ENCODE measurements at regions of chr5 and their contacts with region 1.

Region 1: GRCh38 chr5:73519531-73520283 is 21.5 kb downstream of the BTF3 start:
- DNase-seq: peak in 7 of 10 donors; percentile 24 to 89 (median 61)

Region 2: GRCh38 chr5:73540192-73540591 is 20.5 kb after region 1 on chr5:
- intact Hi-C with region 1: loop called (anchors 1 kb)
- DNase-seq: no peak